Panc1 (cell line): ENCODE measurements at regions of chr15 and their contacts with region 1.

Region 1: GRCh38 chr15:76954744-76955143 is 23.2 kb downstream of the RCN2 start:
- DNase-seq: no peak
- ATAC-seq: no peak
- H3K4me3 ChIP-seq: no peak overlapping the region
- H3K27ac ChIP-seq: no peak overlapping the region
- H3K4me1 ChIP-seq: no peaks in the 10 kb centered on the region
- H3K27me3 ChIP-seq: no peaks in the 10 kb centered on the region
- CTCF ChIP-seq: no peak

Region 2: GRCh38 chr15:77617476-77618230 is 662.9 kb after region 1 on chr15:
- CTCF ChIA-PET with region 1: interaction called, 20 read pairs
- POLR2A ChIA-PET with region 1: no interaction called
- in situ Hi-C with region 1: no loop called
- intact Hi-C with region 1: no loop called
- DNase-seq: no peak
- ATAC-seq: peak; percentile 65; the same call in 1 of the 2 replicates
- H3K4me3 ChIP-seq: no peak overlapping the region
- H3K27ac ChIP-seq: no peak overlapping the region
- H3K4me1 ChIP-seq: peaks cover 17% of the 10 kb centered on the region
- H3K27me3 ChIP-seq: no peaks in the 10 kb centered on the region
- CTCF ChIP-seq: peak; percentile 84